ENCODE measurements at regions of chr6 and their contacts with region 1.

Region 1: DNA sequence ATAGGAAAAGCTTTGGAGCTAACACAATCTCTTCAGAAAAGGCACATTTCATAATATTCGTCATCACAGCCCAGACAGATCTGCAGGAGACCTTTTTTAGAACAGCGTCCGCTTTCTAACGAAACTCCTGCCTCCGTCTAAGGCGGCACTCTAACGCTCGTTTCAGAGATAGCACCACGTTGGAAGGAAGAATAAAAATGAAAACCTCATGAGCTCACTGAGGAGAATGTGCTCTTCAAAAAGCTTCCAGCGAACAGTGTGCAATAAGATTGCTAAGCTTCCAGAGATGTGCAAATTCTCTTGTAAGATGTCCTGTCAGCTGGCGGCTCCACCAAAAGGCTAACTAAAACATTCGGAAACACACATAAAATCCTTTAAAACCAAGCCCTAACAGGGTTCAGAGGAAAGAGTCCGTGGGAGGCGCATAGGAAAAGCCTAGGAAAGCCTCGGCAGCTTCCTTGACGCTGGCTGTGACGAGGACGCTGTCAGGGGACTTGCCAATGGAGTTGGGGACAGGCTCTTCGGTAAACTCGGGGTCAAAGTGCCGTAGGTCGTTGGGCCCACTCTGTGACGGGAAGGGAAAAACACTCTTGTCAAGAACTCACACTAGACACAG is 117.6 kb upstream of the SLC2A12 start:
- DNase-seq: peak; percentile 14
- H3K4me3 ChIP-seq: peak overlapping the region; percentile 99
- H3K27ac ChIP-seq: 0 out of 2 replicates have a peak overlapping the region, but pooled peaks have one; percentile 26
- H3K4me1 ChIP-seq: peaks cover 33% of the 10 kb centered on the region
- H3K27me3 ChIP-seq: no peaks in the 10 kb centered on the region

Region 2: DNA sequence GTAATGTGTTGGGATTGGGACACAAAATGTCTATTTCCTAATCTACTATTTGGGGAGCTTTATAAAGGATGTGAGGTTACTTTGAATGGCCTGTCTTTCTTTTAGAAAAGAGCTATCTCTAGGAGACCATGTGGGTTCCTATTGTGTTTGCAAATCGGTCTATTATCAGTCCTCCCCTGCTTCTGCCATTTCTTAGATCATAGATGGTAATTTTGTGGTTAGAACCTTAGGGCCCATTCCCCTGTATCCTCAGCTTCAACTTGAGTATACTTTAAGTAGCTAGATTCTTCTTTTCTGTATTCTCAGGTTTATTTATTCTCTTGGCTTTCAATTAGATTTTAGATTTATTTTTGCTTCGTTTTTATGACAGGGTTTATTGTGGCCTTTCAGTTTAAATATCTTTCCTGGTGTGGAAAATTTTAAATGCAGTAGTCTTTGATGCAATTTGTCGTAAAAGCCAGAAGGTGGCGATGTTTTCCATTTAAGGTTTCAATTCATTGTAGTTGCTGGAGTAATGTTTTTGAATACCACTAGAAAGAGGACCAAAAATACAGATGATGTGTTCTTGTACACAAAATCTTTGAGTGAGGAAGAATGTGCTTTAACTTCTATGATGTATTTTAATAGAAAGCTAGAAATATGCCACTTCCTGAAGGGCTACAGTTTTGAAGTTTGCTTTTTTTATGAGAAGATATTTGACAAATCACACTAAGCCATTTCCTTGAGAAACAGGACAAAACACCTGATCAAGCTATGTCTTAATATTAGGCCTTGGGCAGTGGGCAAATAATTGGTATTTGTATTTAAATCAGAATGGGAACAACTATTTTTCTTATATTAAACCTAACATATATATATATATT is 196.6 kb before region 1 on chr6:
- in situ Hi-C with region 1: no loop called
- DNase-seq: peak; percentile 70
- H3K4me3 ChIP-seq: no peak overlapping the region
- H3K27ac ChIP-seq: no peak overlapping the region
- H3K4me1 ChIP-seq: peaks cover 6% of the 10 kb centered on the region
- H3K27me3 ChIP-seq: no peaks in the 10 kb centered on the region

Region 3: GRCh38 chr6:134640975-134641429 is 471.0 kb after region 1 on chr6:
- in situ Hi-C with region 1: loop called (anchors 5 kb)
- DNase-seq: peak; percentile 90
- H3K4me3 ChIP-seq: no peak overlapping the region
- H3K27ac ChIP-seq: no peak overlapping the region
- H3K4me1 ChIP-seq: peaks cover 8% of the 10 kb centered on the region
- H3K27me3 ChIP-seq: no peaks in the 10 kb centered on the region

Measured in GM23248 (cell line).